ENCODE measurements at regions of chr1 and their contacts with region 1.

Region 1: GRCh38 chr1:3258386-3259003 is 189.5 kb downstream of the PRDM16 start:
- DNase-seq: no peak
- ATAC-seq: no peak
- H3K4me3 ChIP-seq: no peak overlapping the region
- H3K27ac ChIP-seq: no peak overlapping the region
- H3K4me1 ChIP-seq: no peaks in the 10 kb centered on the region
- H3K27me3 ChIP-seq: no peaks in the 10 kb centered on the region
- CTCF ChIP-seq: no peak

Region 2: DNA sequence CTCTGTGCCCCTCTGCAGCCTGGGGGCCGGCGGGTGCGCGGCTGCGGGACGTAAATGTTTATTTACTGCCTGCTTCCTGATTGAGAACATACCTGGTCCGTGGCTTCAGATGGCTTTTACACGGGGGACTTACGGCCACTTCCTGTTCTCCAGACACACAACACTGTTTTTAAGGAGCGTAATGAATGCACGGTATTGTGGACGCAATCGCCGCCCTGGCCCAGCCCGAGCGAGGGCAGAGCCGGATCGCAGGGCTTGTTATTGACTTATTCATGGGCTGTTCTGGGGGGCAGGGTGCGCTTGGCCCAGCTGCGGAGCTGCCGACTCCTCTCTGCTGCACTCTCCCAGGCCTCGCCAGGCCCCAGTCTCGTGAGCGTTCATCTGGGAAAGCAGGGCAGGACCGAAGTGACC is 290.0 kb before region 1 on chr1:
- CTCF ChIA-PET with region 1: no interaction called
- POLR2A ChIA-PET with region 1: no interaction called
- in situ Hi-C with region 1: no loop called
- intact Hi-C with region 1: no loop called
- DNase-seq: no peak
- ATAC-seq: no peak
- H3K4me3 ChIP-seq: no peak overlapping the region
- H3K27ac ChIP-seq: no peak overlapping the region
- H3K4me1 ChIP-seq: no peaks in the 10 kb centered on the region
- H3K27me3 ChIP-seq: no peaks in the 10 kb centered on the region
- CTCF ChIP-seq: no peak

Region 3: DNA sequence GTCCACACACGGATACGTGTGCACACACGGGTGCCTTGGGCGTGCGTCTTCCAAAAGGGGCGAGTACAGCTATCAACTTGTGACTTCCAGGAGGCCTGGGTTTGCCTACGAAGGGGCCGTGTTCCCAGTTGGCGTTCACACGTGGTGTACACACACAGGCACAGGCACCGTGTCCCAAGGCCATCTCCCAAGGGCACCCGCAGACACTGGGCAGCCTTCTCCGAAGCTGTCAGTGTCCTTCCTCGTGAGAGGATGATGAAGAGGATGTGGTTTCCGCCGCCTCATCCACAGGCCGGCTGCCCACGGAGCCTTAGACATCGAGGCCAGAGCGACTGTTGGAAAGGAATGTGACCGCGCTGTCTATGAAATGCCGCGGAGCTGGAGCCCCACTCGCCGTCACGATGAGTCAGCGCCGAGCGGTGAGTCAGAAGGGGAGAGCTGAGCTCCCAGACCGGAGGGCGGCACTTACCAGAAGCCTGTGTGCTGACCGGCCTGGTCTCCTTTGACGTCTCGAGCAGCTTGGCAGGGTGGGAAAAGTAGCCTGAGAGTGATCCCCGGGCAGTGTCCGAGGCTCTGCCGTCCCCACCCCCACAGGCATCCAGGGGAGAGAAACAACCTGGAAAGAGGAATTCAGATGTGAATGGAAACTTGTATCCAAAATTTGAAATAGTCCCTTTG is 54.5 kb after region 1 on chr1:
- CTCF ChIA-PET with region 1: no interaction called
- POLR2A ChIA-PET with region 1: interaction called, 11 read pairs
- in situ Hi-C with region 1: no loop called
- intact Hi-C with region 1: no loop called
- DNase-seq: peak; percentile 84
- ATAC-seq: peak; percentile 95
- H3K4me3 ChIP-seq: peak overlapping the region in 1 of 2 experiments; percentile 20; a peak in 2 of 4 replicates
- H3K27ac ChIP-seq: peak overlapping the region; percentile 92
- H3K4me1 ChIP-seq: peaks cover 46% of the 10 kb centered on the region
- H3K27me3 ChIP-seq: no peaks in the 10 kb centered on the region
- CTCF ChIP-seq: no peak

Measured in Panc1 (cell line).